Heart left ventricle (tissue), 16 donors: ENCODE measurements at regions of chr12 and their contacts with region 1.

Region 1: GRCh38 chr12:12999959-13000615 is at the start of gene HEBP1:
- DNase-seq: peak; percentile 96 to 99 (median 98)
- ATAC-seq: peak; percentile 98 to 99 (median 98)
- H3K4me3 ChIP-seq: peak within 1 kb of the TSS; percentile 65 to 94 (median 87)
- H3K27ac ChIP-seq: peak within 1 kb of the TSS; percentile 28 to 98 (median 90)
- H3K4me1 ChIP-seq: peaks cover 0 to 64% (median 19%) of the 10 kb centered on the region in 12 donors
- H3K27me3 ChIP-seq: no peaks in the 10 kb centered on the region
- CTCF ChIP-seq: no peak
- POLR2A ChIP-seq: peak in 1 of 2 donors; percentile 94
- total RNA-seq, gene HEBP1: 26.3 to 65.3 (median 52.6) TPM

Region 2: GRCh38 chr12:13038491-13039161 is 38.5 kb after region 1 on chr12:
- intact Hi-C with region 1: loop called in 2 of 10 experiments (anchors 5 kb)
- DNase-seq: no peak
- ATAC-seq: no peak
- H3K4me3 ChIP-seq: no peak overlapping the region
- H3K27ac ChIP-seq: no peak overlapping the region
- H3K4me1 ChIP-seq: peaks cover 0 to 3% (median 0%) of the 10 kb centered on the region in 12 donors
- H3K27me3 ChIP-seq: no peaks in the 10 kb centered on the region
- CTCF ChIP-seq: no peak
- POLR2A ChIP-seq: no peak

Region 3: GRCh38 chr12:13094347-13094746 is 94.3 kb after region 1 on chr12:
- intact Hi-C with region 1: loop called in 1 of 10 experiments (anchors 5 kb)
- DNase-seq: no peak
- ATAC-seq: no peak
- H3K4me3 ChIP-seq: no peak overlapping the region
- H3K27ac ChIP-seq: peak overlapping the region in 1 of 12 donors; percentile 37
- H3K4me1 ChIP-seq: peaks cover 0 to 45% (median 14%) of the 10 kb centered on the region in 12 donors
- H3K27me3 ChIP-seq: no peaks in the 10 kb centered on the region
- CTCF ChIP-seq: no peak
- POLR2A ChIP-seq: no peak

Region 4: GRCh38 chr12:13148064-13148847 is 148.2 kb after region 1 on chr12:
- intact Hi-C with region 1: no loop called
- DNase-seq: no peak
- ATAC-seq: peak in 2 of 4 donors; percentile 31 to 45
- H3K4me3 ChIP-seq: no peak overlapping the region
- H3K27ac ChIP-seq: peak overlapping the region in 8 of 12 donors; percentile 12 to 56 (median 36)
- H3K4me1 ChIP-seq: peaks cover 0 to 47% (median 13%) of the 10 kb centered on the region in 12 donors
- H3K27me3 ChIP-seq: no peaks in the 10 kb centered on the region
- CTCF ChIP-seq: no peak
- POLR2A ChIP-seq: no peak

Region 5: DNA sequence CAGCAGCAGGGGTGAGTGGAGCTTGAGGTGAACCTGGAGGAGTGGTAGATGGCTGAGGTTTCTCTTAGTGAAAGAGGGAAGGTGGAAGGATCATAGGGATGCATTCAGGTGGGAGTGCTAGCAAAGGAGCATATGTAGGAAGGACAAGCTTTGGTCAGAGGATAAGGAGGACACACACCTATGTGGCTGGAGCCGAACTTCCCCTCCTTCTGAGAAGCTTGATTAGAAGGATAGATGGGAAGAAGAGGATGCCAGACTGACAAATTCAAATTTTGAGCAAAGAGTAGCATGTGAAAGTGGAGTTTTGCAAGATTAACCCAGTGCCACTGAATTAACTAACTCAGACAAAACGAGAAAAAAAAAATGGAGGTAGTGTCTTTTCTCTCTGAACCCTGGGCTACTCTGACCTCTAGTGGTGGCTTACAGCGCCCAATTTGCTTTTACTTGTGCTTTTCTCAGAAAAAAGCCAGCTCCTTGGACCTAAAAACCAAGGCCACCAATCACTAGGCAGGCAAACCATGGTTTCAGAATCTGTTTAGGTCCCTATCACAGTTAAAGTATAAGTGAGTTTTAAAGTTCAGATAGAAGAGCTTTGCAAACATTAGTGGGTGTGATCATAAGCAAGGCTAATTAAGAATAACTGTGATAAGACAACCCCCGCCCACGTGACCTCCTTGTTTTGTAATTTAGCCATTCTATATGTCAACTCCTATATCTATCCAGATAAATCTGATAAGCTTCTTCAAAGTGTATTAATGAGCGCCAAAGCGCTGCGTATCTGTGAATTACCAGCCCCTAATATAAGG is 212.0 kb after region 1 on chr12:
- intact Hi-C with region 1: loop called in 5 of 10 experiments (anchors 5 to 10 kb)
- DNase-seq: peak in 3 of 5 donors; percentile 38 to 51 (median 43)
- ATAC-seq: peak in 2 of 4 donors; percentile 26 to 28
- H3K4me3 ChIP-seq: no peak overlapping the region
- H3K27ac ChIP-seq: peak overlapping the region in 1 of 12 donors; percentile 13
- H3K4me1 ChIP-seq: peaks cover 3 to 52% (median 45%) of the 10 kb centered on the region in 12 donors
- H3K27me3 ChIP-seq: no peaks in the 10 kb centered on the region
- CTCF ChIP-seq: peak; percentile 61 to 90 (median 76)
- POLR2A ChIP-seq: no peak

Region 6: DNA sequence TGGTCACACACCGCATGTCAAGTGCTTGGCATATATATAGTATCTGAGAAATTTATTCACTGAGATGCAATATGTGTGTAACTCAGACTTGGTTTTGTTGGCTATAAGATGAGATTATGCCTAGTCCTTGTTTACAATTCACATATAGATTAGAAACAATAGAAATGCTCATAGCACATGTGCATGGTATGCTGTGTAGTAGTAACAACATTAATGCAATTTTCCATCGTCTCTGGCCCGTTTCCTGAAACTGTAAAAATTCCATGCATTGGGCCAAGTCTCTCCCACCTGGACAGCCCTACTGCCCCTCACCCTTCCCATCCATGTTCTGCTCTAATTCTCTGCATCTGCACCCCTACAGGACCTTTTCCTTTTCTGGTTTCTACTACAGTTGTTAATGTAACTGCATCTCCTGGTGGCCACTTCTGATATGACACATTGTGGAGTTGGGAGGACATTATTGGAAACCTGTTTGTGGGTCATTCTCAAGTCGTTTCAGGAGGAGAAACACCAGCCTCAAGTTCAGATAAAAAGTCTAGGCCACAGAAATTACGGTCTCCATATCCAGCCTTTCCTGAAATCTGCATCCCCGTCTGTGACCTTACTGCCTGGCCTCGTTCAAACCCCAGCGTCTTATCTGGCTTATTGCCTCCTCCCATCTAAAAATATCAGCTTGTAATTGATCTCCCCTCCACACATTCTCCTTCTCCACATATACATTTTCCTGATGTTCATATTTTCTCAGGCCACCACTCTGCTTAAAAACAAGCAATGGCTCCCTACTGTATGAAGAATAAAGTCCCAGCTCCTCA is 233.9 kb after region 1 on chr12:
- intact Hi-C with region 1: loop called in 2 of 10 experiments (anchors 5 to 10 kb)
- DNase-seq: peak in 3 of 5 donors; percentile 35 to 40 (median 36)
- ATAC-seq: peak in 3 of 4 donors; percentile 54 to 70 (median 64)
- H3K4me3 ChIP-seq: no peak overlapping the region
- H3K27ac ChIP-seq: no peak overlapping the region
- H3K4me1 ChIP-seq: peaks cover 0 to 10% (median 0%) of the 10 kb centered on the region in 12 donors
- H3K27me3 ChIP-seq: no peaks in the 10 kb centered on the region
- CTCF ChIP-seq: peak; percentile 61 to 85 (median 78)
- POLR2A ChIP-seq: no peak